Vagina (tissue), 2 donors: ENCODE measurements at regions of chr18 and their contacts with region 1.

Region 1: DNA sequence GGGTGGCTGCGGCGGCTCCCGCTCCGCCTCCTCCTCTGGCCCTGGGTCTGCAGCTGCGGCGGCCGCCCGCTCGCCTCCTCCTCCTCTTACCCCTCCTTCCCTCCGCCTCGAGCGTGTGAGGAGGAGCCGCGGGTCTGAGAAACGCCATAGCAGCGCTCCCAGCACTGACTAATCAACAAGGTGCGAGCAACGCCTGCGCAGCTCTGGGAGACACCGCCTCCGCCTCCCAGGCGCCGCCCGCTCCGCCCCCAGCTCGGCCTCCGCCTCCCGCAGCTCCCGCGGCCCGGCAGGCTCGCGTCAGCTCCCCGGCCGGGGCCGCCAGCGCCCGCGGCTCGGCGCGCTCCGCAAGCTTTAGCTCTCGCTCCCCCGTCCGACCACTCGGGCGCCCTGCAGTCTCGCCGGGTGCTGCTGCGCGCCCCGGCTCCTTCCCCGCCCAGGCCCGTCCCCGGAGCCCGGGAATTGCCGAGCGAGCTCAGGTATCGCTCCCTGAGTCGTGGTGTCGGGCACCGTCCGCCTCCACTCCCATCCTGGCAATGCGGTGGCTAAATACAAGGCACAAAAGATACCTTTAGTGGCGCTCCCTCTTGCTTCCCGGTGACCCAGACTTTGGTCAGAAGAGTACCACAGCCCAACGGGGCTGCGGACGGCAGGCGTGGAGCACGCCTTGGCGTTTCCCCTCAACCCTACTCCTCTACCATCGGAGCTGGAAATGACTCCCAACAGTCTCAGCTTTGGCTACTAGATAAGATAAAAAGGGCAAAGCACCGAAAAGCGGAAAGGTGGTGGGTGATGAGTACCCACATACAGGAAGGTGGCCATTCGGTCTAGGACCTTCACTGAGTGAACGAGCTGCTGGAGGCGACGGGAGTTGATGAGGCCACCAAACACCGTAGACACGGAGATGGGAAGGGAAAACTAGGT is at the start of gene GAREM1:
- DNase-seq: peak in 1 of 2 donors; percentile 98
- H3K4me3 ChIP-seq: peak within 1 kb of the TSS; percentile 68 to 81
- H3K27ac ChIP-seq: peak within 1 kb of the TSS; percentile 90
- H3K4me1 ChIP-seq: peaks cover 26% of the 10 kb centered on the region
- H3K27me3 ChIP-seq: no peaks in the 10 kb centered on the region
- CTCF ChIP-seq: peak; percentile 29 to 64 (median 50)
- POLR2A ChIP-seq: peak in 1 of 2 donors; percentile 94
- total RNA-seq, gene GAREM1: 15.7 TPM

Region 2: DNA sequence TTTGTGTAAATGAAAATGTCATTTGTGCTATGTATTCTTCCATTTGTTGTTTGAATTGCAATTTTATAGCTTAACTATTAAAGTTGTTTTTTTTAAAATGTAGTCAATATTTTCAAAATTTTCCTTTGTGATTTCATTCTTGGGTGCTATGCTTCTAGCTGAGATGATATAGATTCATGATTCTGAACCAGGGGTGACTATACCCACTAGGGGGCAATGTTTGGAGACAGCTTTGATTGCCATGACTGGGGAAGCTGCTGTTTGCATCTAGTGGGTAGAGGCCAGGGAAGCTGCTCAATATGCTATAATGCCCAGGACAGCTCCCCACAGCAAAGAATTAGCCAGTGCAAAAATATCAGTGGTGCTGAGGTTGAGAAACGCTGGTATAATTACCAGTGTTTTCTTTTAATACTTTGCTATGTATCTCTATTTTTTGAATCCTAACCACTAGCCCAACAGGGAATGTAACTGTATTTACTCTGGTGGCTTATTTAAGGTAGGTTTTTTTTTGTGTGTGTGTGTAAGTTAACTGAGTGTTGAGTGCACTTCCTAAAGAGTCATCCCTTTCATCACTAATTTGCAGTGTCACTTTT is 181.4 kb before region 1 on chr18:
- intact Hi-C with region 1: loop called (anchors 10 kb)
- DNase-seq: no peak
- H3K4me3 ChIP-seq: no peak overlapping the region
- H3K27ac ChIP-seq: no peak overlapping the region
- H3K4me1 ChIP-seq: peaks cover 8% of the 10 kb centered on the region
- H3K27me3 ChIP-seq: no peaks in the 10 kb centered on the region
- CTCF ChIP-seq: peak; percentile 25 to 48 (median 38)
- POLR2A ChIP-seq: no peak

Region 3: GRCh38 chr18:32389858-32390257 is 81.1 kb before region 1 on chr18:
- intact Hi-C with region 1: no loop called
- DNase-seq: no peak
- H3K4me3 ChIP-seq: no peak overlapping the region
- H3K27ac ChIP-seq: no peak overlapping the region
- H3K4me1 ChIP-seq: peaks cover 18% of the 10 kb centered on the region
- H3K27me3 ChIP-seq: no peaks in the 10 kb centered on the region
- CTCF ChIP-seq: no peak
- POLR2A ChIP-seq: no peak

Region 4: DNA sequence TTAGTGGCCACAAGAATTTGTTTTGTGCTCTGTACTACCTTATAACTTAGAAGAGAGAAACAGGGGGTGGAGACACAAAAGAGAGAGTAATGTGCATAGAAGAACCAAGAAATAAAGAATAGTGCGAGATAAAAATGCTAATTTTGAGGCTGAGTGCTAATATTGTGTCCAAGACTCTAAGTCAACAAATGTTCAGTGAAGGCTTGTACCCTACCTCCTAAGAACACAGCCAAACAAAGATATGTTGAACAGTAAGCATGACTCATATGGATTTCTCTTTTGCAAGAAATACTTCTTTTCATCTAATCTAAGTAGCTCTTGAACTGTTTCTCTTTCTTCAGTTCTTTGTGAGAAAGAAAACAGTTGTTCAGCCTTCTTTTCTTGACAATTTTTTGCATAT is 45.5 kb before region 1 on chr18:
- intact Hi-C with region 1: no loop called
- DNase-seq: no peak
- H3K4me3 ChIP-seq: no peak overlapping the region
- H3K27ac ChIP-seq: peak overlapping the region; percentile 25
- H3K4me1 ChIP-seq: peaks cover 27% of the 10 kb centered on the region
- H3K27me3 ChIP-seq: no peaks in the 10 kb centered on the region
- CTCF ChIP-seq: no peak
- POLR2A ChIP-seq: no peak